Heart right ventricle (tissue), 16 donors: ENCODE measurements at regions of chr19 and their contacts with region 1.

Region 1: DNA sequence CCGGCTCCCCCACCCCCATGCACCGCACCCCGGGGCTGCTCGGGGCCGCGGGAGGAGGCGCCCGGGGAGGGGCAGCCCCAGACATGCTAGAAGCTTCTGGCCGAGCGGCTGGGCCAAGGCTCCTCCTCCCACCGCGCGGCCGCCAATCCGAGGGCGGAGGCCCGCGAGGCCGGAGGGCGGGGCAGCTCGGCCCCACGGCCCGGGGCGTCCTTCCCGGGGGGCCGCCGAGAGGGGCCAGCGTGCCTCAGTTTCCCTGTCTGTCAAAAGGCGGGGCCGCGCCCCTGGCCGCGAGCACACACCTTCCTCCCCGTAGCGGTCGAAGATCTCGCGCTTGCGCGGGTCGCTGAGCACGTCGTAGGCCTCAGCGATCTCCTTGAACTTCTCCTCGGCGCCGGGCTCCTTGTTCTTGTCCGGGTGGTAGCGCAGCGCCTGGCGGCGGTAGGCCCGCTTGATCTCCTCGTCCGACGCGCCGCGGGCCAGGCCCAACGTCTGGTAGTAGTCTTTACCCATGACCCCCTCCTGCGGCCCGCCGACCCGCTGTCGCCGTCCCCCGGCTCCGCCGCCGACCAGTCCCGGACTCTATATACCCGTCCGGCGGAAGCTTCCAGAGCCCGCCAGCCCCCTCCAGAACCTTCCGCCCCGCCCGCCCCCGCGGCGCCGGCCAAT is at the start of gene DNAJB1:
- DNase-seq: peak; percentile 83 to 87
- ATAC-seq: peak; percentile 81 to 90 (median 88)
- H3K4me3 ChIP-seq: peak within 1 kb of the TSS; percentile 65 to 99 (median 92)
- H3K27ac ChIP-seq: peak within 1 kb of the TSS; percentile 96 to 100 (median 100)
- H3K4me1 ChIP-seq: peaks cover 15 to 55% (median 42%) of the 10 kb centered on the region in 9 donors
- H3K27me3 ChIP-seq: no peaks in the 10 kb centered on the region
- CTCF ChIP-seq: no peak
- total RNA-seq, gene DNAJB1: 40.3 to 99.0 (median 46.4) TPM

Region 2: DNA sequence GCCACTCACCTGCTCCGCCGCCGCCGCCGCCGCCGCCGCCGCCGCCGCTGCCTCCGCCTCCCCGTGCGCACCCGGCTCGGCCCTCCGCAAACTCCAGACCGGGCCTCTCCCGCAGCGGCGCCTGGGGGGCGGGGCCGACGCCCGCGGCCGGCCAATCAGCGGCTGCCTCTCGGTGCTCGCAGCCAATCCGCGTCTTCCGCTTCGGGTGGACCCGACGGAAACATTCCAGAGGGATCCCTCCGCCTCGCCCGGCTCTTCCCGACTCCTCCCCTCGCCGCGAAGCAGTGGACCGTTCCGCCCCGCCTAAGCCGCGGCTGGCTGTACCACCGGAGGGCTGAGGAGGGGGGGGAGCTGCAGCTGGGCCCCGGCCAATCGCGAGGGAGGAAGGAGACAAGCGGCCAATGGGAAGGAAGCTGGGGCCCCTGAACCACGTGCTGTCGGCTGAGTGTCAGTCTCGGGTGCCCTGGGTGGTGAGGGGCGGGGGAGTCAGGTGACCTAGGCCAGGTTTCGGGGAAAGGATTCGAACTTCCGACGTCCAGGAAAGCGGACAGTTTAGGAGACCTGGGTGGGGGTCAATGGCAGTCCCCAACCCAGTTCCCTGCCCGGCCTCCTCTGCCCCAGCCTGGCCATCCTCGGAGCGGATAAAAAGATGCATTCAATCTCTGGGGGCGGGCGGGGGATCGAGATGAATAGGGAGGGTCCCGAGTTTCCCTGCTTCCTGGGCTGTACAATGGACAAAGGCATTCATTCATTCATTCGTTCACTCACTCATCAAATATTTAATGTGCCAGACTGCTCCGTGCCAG is 21.7 kb before region 1 on chr19 and contains the start of gene GIPC1:
- intact Hi-C with region 1: loop called in 2 of 10 experiments (anchors 1 to 2 kb)
- DNase-seq: peak; percentile 97
- ATAC-seq: peak; percentile 96 to 99 (median 98)
- H3K4me3 ChIP-seq: peak within 1 kb of the TSS; percentile 72 to 93 (median 82)
- H3K27ac ChIP-seq: peak within 1 kb of the TSS in 9 of 10 donors; percentile 63 to 81 (median 79)
- H3K4me1 ChIP-seq: peaks cover 3 to 36% (median 27%) of the 10 kb centered on the region in 9 donors
- H3K27me3 ChIP-seq: no peaks in the 10 kb centered on the region
- CTCF ChIP-seq: no peak
- total RNA-seq, gene GIPC1: 41.6 to 51.5 (median 45.8) TPM